MCF 10A (cell line): ENCODE measurements at regions of chr12 and their contacts with region 1.

Region 1: DNA sequence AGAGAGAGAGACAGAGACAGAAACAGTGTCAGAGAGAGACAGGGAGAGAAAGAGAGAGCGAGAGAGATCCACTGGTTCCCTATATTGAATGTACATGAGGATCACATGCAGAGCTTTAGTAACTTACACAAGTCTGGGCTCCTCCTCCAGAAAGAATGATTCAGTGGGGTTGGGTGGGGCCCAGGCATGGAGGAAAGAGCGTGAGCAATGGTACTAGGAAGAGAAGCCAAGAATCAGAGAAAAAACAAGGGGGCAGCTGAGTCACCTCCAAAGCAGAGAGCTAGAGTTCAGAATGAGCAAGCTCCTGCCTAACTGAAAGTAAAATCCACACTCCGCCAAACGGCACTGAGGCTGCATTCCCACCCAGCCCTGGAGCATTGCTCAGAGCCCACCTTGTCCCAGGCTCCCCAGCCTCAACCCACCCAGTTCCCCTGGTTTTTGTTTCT is 670.1 kb upstream of the TBX3 start:
- DNase-seq: peak; percentile 98
- H3K4me3 Mint-ChIP-seq: peak overlapping the region; percentile 84
- H3K27ac Mint-ChIP-seq: peak overlapping the region; percentile 99
- H3K4me1 Mint-ChIP-seq: peaks cover 42% of the 10 kb centered on the region
- H3K27me3 Mint-ChIP-seq: no peaks in the 10 kb centered on the region
- CTCF ChIP-seq: no peak

Region 2: GRCh38 chr12:115257791-115258190 is 96.2 kb before region 1 on chr12:
- CTCF ChIA-PET with region 1: no interaction called
- POLR2A ChIA-PET with region 1: interaction called, 3 read pairs
- intact Hi-C with region 1: loop called (anchors 5 kb)
- DNase-seq: peak; percentile 88
- H3K4me3 Mint-ChIP-seq: no peak overlapping the region
- H3K27ac Mint-ChIP-seq: peak overlapping the region; percentile 34
- H3K4me1 Mint-ChIP-seq: peaks cover 14% of the 10 kb centered on the region
- H3K27me3 Mint-ChIP-seq: no peaks in the 10 kb centered on the region
- CTCF ChIP-seq: no peak

Region 3: DNA sequence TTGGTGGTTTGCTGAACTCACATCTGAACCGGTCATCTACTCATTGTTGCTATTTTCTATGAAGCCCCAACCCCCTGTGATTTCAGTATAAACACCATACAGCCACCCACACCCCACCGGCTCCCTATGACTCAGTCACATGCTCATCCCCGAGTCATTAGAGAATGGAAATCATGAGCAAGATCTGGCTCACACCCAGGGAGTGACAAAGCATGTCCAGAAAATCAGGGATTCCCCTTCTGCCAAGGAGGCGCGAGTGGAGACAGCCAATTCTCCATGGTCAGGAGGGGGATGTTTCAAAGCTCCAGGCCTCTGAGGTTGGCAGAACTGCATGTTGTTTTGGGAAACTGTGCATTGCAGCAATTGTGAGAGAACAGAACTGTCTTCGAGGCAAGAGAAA is 12.6 kb before region 1 on chr12:
- CTCF ChIA-PET with region 1: no interaction called
- POLR2A ChIA-PET with region 1: interaction called, 66 read pairs
- intact Hi-C with region 1: loop called (anchors 1 kb)
- DNase-seq: peak; percentile 99
- H3K4me3 Mint-ChIP-seq: peak overlapping the region; percentile 31
- H3K27ac Mint-ChIP-seq: peak overlapping the region; percentile 94
- H3K4me1 Mint-ChIP-seq: peaks cover 21% of the 10 kb centered on the region
- H3K27me3 Mint-ChIP-seq: no peaks in the 10 kb centered on the region
- CTCF ChIP-seq: no peak

Region 4: GRCh38 chr12:115440438-115440837 is 86.4 kb after region 1 on chr12:
- CTCF ChIA-PET with region 1: no interaction called
- POLR2A ChIA-PET with region 1: no interaction called
- intact Hi-C with region 1: no loop called
- DNase-seq: peak; percentile 71
- H3K4me3 Mint-ChIP-seq: no peak overlapping the region
- H3K27ac Mint-ChIP-seq: no peak overlapping the region
- H3K4me1 Mint-ChIP-seq: peaks cover 6% of the 10 kb centered on the region
- H3K27me3 Mint-ChIP-seq: no peaks in the 10 kb centered on the region
- CTCF ChIP-seq: no peak

Region 5: DNA sequence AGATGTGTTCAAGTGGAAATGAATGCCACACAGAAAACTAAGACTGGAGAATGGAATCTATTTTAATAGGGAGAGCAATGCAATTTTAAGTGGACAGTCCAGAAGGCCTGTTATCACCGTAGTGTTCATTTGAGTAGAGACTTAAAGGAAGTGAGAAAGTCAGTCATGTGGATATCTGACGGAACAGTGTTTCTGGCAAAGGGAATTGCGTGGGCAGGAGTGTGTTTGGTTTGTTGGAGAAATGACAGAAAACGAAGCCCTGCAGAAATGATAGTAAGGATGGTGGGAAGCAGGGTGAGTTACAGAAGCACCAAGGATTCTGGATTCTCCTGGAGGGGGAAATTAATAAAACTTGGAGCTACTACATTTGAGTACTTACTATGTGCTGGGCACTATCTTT is 146.8 kb after region 1 on chr12:
- CTCF ChIA-PET with region 1: no interaction called
- POLR2A ChIA-PET with region 1: no interaction called
- intact Hi-C with region 1: no loop called
- DNase-seq: no peak
- H3K4me3 Mint-ChIP-seq: no peak overlapping the region
- H3K27ac Mint-ChIP-seq: no peak overlapping the region
- H3K4me1 Mint-ChIP-seq: no peaks in the 10 kb centered on the region
- H3K27me3 Mint-ChIP-seq: no peaks in the 10 kb centered on the region
- CTCF ChIP-seq: no peak